ENCODE measurements at regions of chr21 and their contacts with region 1.

Region 1: DNA sequence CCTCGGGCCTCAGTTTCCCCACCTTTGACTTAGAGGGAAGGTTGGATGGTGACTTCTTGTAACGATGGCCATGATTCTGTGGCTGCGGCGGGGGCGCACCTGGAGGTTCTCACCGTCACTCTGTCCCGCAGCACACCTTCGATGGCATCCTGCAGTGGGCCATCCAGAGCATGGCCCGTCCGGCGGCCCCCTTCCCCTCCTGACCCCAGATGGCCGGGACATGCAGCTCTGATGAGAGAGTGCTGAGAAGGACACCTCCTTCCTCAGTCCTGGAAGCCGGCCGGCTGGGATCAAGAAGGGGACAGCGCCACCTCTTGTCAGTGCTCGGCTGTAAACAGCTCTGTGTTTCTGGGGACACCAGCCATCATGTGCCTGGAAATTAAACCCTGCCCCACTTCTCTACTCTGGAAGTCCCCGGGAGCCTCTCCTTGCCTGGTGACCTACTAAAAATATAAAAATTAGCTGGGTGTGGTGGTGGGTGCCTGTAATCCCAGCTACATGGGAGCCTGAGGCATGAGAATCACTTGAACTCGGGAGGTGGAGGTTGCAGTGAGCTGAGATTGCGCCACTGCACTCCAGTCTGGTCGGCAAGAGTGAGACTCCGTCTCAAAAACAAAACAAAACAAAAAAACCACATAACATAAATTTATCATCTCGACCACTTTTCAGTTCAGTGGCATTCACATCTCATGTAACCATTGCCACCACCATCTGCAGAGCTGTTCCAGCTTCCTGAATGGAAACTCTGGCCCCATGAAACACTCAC is 2.1 kb upstream of the PFKL start:
- DNase-seq: peak; percentile 81 to 85
- ATAC-seq: peak; percentile 46 to 78; a peak in 5 of 6 replicates
- H3K4me3 ChIP-seq: no peak overlapping the region
- H3K27ac ChIP-seq: no peak overlapping the region
- H3K4me1 ChIP-seq: peaks cover 28% of the 10 kb centered on the region
- CTCF ChIP-seq: peak; percentile 67
- EP300 ChIP-seq: no peak
- POLR2A ChIP-seq: no peak
- RAD21 ChIP-seq: peak; percentile 77 to 81

Region 2: DNA sequence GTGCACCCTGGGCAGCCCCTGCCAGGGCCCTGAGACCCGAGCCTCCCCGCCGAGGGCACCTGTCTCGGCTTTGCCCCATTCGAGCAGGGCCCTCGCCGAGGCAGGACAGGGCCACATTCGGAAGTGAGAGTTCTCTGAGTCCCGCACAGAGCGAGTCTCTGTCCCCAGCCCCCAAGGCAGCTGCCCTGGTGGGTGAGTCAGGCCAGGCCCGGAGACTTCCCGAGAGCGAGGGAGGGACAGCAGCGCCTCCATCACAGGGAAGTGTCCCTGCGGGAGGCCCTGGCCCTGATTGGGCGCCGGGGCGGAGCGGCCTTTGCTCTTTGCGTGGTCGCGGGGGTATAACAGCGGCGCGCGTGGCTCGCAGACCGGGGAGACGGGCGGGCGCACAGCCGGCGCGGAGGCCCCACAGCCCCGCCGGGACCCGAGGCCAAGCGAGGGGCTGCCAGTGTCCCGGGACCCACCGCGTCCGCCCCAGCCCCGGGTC is 12.2 kb before region 1 on chr21 and contains the start of gene AIRE:
- CTCF ChIA-PET with region 1: interaction called, 11 read pairs
- POLR2A ChIA-PET with region 1: no interaction called
- DNase-seq: no peak
- ATAC-seq: 0 out of 6 replicates have a peak, but pooled peaks of 1 of the 2 experiments have one; percentile 30
- H3K4me3 ChIP-seq: no peak within 1 kb of the TSS
- H3K27ac ChIP-seq: no peak within 1 kb of the TSS
- H3K4me1 ChIP-seq: no peaks in the 10 kb centered on the region
- CTCF ChIP-seq: no peak
- EP300 ChIP-seq: no peak
- POLR2A ChIP-seq: no peak
- RAD21 ChIP-seq: no peak
- polyA plus RNA-seq, gene AIRE: not detected in 2 replicates